CD8-positive, alpha-beta T cell (primary cell): ENCODE measurements at regions of chr21 and their contacts with region 1.

Region 1: DNA sequence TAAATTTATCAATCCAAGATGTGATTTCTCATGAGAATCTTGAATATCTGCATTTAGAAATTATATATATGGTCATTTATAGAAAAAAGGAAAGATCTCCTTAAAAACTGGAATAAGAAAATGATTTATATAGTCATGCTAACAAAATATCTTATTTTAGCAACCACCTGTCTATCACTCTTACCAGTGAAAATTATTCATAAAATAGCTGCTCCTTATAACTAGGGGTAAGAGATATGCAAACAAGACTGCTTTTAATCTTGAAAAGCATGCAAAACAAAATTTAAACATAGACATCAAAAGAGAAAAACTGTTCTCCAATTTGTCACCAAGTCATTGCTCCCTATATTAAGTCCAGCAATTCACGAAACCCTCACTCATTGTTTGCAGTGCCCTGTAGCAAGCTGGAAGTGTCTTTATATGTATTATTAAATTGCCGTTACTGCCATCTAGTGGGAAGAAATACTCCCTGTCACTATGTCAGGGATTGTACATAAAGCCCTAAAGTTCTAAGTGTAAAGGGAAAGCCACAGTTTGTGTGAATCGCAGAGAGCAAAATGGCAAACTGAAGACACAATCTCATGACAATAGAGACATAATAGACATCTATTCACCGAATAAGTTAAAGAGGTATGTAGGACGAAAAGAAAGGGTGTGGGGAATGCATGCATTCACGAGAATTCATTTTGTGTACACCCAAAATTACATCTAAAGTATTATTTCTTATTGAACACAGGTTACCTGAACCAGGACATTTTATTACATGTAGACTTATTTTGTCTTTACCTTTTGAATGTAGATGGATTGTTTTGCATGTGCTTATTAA is 600.5 kb downstream of the USP25 start:
- DNase-seq: peak in 2 of 9 experiments; percentile 36 to 50
- ATAC-seq: peak; percentile 38
- H3K4me3 ChIP-seq: no peak overlapping the region
- H3K4me3 Mint-ChIP-seq: no peak overlapping the region
- H3K27ac ChIP-seq: no peak overlapping the region
- H3K27ac Mint-ChIP-seq: no peak overlapping the region
- H3K4me1 ChIP-seq: no peaks in the 10 kb centered on the region
- H3K4me1 Mint-ChIP-seq: no peaks in the 10 kb centered on the region
- H3K27me3 ChIP-seq: no peaks in the 10 kb centered on the region
- H3K27me3 Mint-ChIP-seq: no peaks in the 10 kb centered on the region
- CTCF ChIP-seq: peak; percentile 51

Region 2: DNA sequence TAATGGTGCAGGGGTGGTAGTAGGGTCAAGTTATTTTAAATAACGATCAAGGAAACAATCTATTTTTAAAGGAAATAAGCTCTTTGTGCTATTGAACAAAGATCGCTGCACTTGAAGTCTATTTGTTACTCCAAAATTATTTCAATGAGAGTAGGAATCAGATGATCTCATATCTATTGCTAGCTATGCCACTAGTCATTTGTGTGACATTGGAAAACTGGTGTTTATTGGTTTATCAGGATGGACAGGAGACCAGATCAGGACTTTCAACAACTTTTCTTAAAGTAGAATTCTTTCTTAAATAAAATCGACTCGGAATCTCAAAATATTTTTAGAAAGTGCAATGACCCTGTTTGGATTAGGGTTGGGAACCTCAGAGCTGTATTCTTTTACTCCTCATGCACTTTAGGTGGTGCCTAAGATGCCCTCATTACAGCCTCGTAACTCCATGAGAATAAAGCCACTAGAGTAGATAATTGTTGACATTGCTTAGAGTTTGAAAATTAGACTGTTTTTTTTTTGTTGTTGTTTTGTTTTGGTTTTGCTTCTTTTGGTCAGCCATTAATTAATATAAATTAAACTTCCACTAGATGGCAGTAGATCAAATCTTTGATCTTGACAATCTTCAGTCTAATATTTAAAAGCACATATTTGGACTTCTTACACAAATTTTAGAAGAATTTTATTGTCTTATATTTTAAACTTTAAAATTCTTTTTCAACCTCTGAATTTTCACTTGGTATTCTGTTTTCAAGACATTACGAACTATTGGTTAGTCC is 248.1 kb before region 1 on chr21:
- CTCF ChIA-PET with region 1: no interaction called
- POLR2A ChIA-PET with region 1: no interaction called
- intact Hi-C with region 1: loop called in 1 of 2 experiments (anchors 2 kb)
- DNase-seq: no peak
- ATAC-seq: no peak
- H3K4me3 ChIP-seq: no peak overlapping the region
- H3K4me3 Mint-ChIP-seq: no peak overlapping the region
- H3K27ac ChIP-seq: no peak overlapping the region
- H3K27ac Mint-ChIP-seq: no peak overlapping the region
- H3K4me1 ChIP-seq: no peaks in the 10 kb centered on the region
- H3K4me1 Mint-ChIP-seq: no peaks in the 10 kb centered on the region
- H3K27me3 ChIP-seq: no peaks in the 10 kb centered on the region
- H3K27me3 Mint-ChIP-seq: no peaks in the 10 kb centered on the region
- CTCF ChIP-seq: no peak